HEK293T (cell line): ENCODE measurements at regions of chr7 and their contacts with region 1.

Region 1: DNA sequence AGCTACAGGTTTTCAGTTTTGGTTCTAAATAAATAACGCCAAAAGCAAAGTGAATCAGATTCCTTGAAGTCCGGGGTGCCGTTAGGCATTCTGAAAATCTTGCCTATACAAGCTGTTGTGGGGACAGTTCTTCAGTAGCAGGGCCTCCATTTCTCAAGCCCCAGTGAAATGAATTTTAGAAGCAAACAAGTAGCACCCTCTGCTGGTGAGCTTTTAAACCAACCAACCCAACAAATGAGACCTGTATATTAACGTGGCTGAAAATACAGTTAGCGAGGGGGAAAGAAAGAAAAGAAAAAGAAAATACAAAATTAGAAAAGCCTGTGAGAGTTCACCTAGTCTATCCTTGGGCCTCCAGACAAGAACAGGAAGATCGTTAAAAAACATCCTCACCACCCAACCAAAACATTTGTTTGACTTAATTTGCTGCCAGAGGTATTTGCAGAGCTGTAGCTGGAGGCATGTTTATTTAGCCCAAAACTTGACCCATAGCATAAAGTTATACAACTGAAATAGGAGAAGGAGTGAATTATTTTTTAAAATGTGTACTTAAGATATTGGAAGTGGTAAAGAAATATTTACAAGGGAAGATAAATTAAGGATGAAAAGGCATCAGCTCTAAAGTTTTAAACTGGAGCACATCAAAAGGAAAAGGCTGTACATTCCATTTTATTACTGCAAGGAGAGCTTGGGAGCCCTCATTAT is 98.9 kb downstream of the DYNC1I1 start:
- DNase-seq: peak; percentile 61

Region 2: GRCh38 chr7:95723592-95724180 is 147.5 kb before region 1 on chr7:
- CTCF ChIA-PET with region 1: interaction called, 81 read pairs
- POLR2A ChIA-PET with region 1: no interaction called
- DNase-seq: peak; percentile 67

Region 3: DNA sequence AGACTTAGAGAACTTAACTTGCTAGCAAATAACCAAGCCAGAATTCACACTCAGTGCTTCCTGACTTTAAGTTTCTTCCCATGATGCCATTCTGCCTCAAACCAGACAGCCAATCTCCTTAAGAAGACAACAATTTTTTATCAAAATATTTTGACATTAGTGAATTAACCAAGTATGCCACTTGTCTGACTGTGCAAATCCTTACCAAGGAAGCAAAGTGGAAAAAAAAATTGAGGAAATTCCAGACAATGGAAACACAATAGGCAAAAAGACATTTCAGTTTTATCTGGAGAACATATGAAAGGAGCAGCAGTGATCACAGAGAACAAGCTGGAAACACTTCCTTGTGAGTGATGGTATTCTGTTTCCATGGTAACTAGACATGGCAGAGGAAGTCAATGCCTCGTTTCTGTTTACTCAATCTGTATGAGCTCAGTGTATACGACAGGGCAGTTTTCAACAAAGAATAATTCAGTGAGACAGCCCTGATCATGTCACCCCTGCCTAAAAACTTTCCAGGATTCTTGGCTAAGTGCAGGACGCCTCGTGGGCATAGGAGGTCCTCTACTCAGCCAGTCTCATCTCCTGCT is 15.4 kb after region 1 on chr7:
- CTCF ChIA-PET with region 1: no interaction called
- POLR2A ChIA-PET with region 1: no interaction called
- DNase-seq: no peak